ENCODE measurements at regions of chr12 and their contacts with region 1.

Region 1: GRCh38 chr12:39990122-39991101 is 115.5 kb downstream of the SLC2A13 start:
- DNase-seq: peak; percentile 9
- ATAC-seq: peak; percentile 98
- H3K4me3 ChIP-seq: no peak overlapping the region
- H3K27ac ChIP-seq: no peak overlapping the region
- H3K4me1 ChIP-seq: no peaks in the 10 kb centered on the region
- H3K27me3 ChIP-seq: no peaks in the 10 kb centered on the region
- CTCF ChIP-seq: peak; percentile 78 to 86 (median 82)
- EP300 ChIP-seq: no peak
- POLR2A ChIP-seq: no peak
- RAD21 ChIP-seq: peak; percentile 68

Region 2: DNA sequence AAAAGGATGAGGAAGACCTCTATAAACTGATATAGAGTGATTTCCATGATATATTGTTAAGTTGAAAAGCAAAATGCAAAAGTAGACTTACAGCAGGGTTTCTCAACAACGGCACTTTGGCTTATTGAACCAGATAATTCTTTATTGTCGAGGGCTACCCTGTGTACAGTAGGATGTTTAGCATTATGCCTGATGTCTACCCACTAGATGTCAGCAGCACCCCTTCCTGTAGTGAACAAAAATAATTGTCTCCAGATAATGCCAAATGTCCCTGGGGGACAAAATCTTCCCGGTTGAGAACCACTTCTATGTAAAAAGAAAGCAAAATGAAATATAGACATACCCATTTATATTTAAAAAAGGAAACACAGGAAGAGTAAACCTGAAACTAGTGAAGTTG is 403.2 kb before region 1 on chr12:
- CTCF ChIA-PET with region 1: interaction called, 6 read pairs
- POLR2A ChIA-PET with region 1: no interaction called
- RAD21 ChIA-PET with region 1: no interaction called
- SMC1A ChIA-PET with region 1: interaction called, 4 read pairs
- in situ Hi-C with region 1: no loop called
- intact Hi-C with region 1: loop called (anchors 5 kb)
- DNase-seq: no peak
- ATAC-seq: peak; percentile 84
- H3K4me3 ChIP-seq: no peak overlapping the region
- H3K27ac ChIP-seq: no peak overlapping the region
- H3K4me1 ChIP-seq: no peaks in the 10 kb centered on the region
- H3K27me3 ChIP-seq: no peaks in the 10 kb centered on the region
- CTCF ChIP-seq: peak; percentile 39 to 79 (median 55); a peak in 4 of 6 replicates
- EP300 ChIP-seq: no peak
- POLR2A ChIP-seq: no peak
- RAD21 ChIP-seq: peak; percentile 50

Region 3: GRCh38 chr12:39764944-39765560 is 225.4 kb before region 1 on chr12:
- CTCF ChIA-PET with region 1: interaction called, 26 read pairs
- POLR2A ChIA-PET with region 1: no interaction called
- RAD21 ChIA-PET with region 1: interaction called, 3 read pairs
- SMC1A ChIA-PET with region 1: interaction called, 5 read pairs
- in situ Hi-C with region 1: no loop called
- intact Hi-C with region 1: loop called (anchors 1 kb)
- DNase-seq: no peak
- ATAC-seq: peak; percentile 74
- H3K4me3 ChIP-seq: no peak overlapping the region
- H3K27ac ChIP-seq: no peak overlapping the region
- H3K4me1 ChIP-seq: no peaks in the 10 kb centered on the region
- H3K27me3 ChIP-seq: no peaks in the 10 kb centered on the region
- CTCF ChIP-seq: peak; percentile 66 to 75 (median 67)
- EP300 ChIP-seq: no peak
- POLR2A ChIP-seq: no peak
- RAD21 ChIP-seq: peak; percentile 85

Region 4: GRCh38 chr12:39839072-39839471 is 151.3 kb before region 1 on chr12:
- CTCF ChIA-PET with region 1: no interaction called
- POLR2A ChIA-PET with region 1: no interaction called
- RAD21 ChIA-PET with region 1: no interaction called
- SMC1A ChIA-PET with region 1: no interaction called
- in situ Hi-C with region 1: no loop called
- intact Hi-C with region 1: no loop called
- DNase-seq: no peak
- ATAC-seq: no peak
- H3K4me3 ChIP-seq: no peak overlapping the region
- H3K27ac ChIP-seq: no peak overlapping the region
- H3K4me1 ChIP-seq: no peaks in the 10 kb centered on the region
- H3K27me3 ChIP-seq: no peaks in the 10 kb centered on the region
- CTCF ChIP-seq: no peak
- EP300 ChIP-seq: no peak
- POLR2A ChIP-seq: no peak
- RAD21 ChIP-seq: no peak

Region 5: DNA sequence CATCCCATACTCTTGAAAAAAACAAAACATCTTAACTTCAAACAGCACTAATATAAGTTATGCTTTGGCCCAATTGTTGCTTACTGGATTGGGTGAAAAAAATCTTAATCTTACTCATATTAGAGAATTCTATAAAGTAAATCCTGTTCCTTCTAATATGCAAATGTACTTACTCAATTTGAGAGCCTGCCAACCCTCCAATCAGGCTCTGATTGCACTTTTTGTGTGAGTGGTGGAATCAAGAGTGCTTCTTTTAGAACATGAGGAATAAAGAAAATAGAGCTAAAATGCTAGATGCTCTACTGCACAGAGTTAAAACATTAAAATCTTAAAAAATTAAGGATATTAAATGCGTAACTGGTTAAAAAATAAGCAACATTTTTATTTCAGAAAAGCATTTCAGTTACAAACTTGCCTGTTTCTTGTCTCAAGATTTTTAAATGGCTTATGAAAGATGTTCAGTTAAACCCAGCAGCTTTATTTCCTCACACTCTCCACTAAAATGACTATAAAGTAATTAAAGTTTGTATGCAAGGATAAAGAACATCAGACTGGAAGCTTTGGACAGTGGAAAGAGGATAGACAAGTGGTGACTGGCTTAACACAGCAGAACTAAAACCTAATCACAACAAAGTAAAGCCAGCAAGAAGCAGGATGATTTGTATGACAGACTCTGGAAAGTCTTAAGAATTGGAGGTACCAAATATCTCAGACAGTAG is 62.1 kb before region 1 on chr12:
- CTCF ChIA-PET with region 1: no interaction called
- POLR2A ChIA-PET with region 1: no interaction called
- RAD21 ChIA-PET with region 1: no interaction called
- SMC1A ChIA-PET with region 1: no interaction called
- in situ Hi-C with region 1: no loop called
- intact Hi-C with region 1: no loop called
- DNase-seq: no peak
- ATAC-seq: no peak
- H3K4me3 ChIP-seq: no peak overlapping the region
- H3K27ac ChIP-seq: no peak overlapping the region
- H3K4me1 ChIP-seq: no peaks in the 10 kb centered on the region
- H3K27me3 ChIP-seq: no peaks in the 10 kb centered on the region
- CTCF ChIP-seq: no peak
- EP300 ChIP-seq: no peak
- POLR2A ChIP-seq: no peak
- RAD21 ChIP-seq: no peak

Region 6: DNA sequence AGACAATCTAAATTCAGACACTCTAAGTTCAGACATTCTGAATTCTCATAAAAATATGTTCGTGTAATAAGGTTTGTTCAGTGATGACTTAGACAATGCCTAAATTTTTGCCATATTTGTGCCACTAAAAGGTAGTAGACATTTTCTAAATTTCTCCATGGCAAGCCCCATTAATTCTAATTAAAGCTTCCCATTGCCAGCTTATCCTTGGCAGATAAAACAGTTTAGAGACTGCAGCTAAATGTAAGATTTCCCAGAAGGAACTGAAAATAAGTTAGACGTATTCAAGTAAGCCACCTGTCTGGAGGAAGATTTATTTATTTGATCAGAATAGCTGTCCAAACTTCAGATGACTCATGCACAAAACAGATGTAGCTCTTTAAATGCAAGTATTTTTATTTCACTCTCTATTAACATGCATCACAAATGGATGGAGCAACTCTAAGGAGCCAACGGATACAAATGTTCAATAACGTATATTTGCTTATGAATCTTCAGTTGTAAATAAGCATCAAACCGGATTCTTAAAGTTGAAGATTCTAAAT is 15.0 kb before region 1 on chr12:
- CTCF ChIA-PET with region 1: interaction called, 4 read pairs
- POLR2A ChIA-PET with region 1: no interaction called
- RAD21 ChIA-PET with region 1: no interaction called
- SMC1A ChIA-PET with region 1: interaction called, 11 read pairs
- in situ Hi-C with region 1: no loop called
- intact Hi-C with region 1: no loop called
- DNase-seq: no peak
- ATAC-seq: no peak
- H3K4me3 ChIP-seq: no peak overlapping the region
- H3K27ac ChIP-seq: no peak overlapping the region
- H3K4me1 ChIP-seq: no peaks in the 10 kb centered on the region
- H3K27me3 ChIP-seq: no peaks in the 10 kb centered on the region
- CTCF ChIP-seq: no peak
- EP300 ChIP-seq: no peak
- POLR2A ChIP-seq: no peak
- RAD21 ChIP-seq: no peak

Region 7: GRCh38 chr12:40002178-40003169 is 12.1 kb after region 1 on chr12:
- CTCF ChIA-PET with region 1: interaction called, 11 read pairs
- POLR2A ChIA-PET with region 1: no interaction called
- RAD21 ChIA-PET with region 1: interaction called, 3 read pairs
- SMC1A ChIA-PET with region 1: interaction called, 3 read pairs
- in situ Hi-C with region 1: no loop called
- intact Hi-C with region 1: no loop called
- DNase-seq: no peak
- ATAC-seq: no peak
- H3K4me3 ChIP-seq: no peak overlapping the region
- H3K27ac ChIP-seq: no peak overlapping the region
- H3K4me1 ChIP-seq: no peaks in the 10 kb centered on the region
- H3K27me3 ChIP-seq: no peaks in the 10 kb centered on the region
- CTCF ChIP-seq: no peak
- EP300 ChIP-seq: no peak
- POLR2A ChIP-seq: no peak
- RAD21 ChIP-seq: no peak

Measured in GM12878 (cell line).